ENCODE measurements at regions of chr2 and their contacts with region 1.

Region 1: DNA sequence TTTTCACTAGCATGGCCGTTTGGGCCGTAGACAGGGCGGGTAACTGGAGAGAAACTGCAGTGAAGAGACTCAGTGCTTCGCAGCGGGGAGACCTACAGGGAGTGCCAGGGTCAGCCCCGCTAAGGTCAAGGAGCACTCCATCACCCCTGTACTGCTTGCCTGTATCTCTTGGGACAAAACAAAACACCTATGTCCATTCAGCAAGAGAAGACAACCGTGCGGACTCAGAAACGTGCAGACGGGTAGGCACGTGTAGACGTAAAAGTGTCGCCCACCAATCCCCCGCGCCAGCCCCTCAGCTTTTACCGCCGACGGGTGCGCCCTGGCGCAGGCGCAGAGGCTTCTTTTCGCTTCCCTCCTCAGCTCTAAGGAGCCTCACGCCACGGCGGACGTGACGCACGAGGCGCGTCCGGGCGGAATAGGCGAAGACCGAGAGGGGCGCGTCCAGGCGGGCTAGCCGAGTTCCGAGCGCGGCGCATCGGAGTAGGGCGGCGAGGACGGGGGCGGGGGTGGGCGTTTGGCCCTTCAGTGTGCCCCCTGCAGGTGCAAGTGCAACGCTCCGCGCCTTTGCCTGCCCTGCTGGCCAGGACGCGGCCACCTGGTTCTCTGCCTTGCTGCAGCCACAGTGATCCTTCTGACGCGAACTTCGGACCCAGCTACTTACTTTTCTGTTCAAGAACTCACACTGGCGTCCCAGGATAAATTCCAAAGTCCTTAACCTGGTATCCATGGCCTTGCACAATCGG is 3.3 kb upstream of the SOS1 start:
- DNase-seq: peak; percentile 99
- H3K4me3 Mint-ChIP-seq: peak overlapping the region; percentile 87
- H3K27ac Mint-ChIP-seq: peak overlapping the region; percentile 92
- H3K4me1 Mint-ChIP-seq: peaks cover 44% of the 10 kb centered on the region
- H3K27me3 Mint-ChIP-seq: no peaks in the 10 kb centered on the region

Region 2: DNA sequence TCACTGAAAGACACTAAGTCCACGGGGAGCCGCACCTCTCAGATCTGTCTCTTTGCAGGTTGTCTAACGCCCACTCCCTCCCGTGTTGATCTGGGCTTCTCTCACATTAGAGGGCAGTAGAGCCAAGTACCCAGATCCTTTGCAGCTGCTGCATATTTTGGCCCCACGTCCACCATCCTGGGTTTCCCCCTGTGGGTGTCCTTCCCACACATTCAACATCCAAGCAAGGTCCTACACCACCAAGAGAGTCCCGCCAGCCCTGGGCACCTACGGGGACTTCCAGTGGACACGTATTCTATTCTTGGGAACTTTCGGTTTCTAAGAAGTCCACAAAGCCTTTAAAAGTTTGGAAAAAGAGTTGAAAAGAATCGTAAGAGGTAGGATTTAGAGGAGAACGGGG is 863.7 kb before region 1 on chr2:
- intact Hi-C with region 1: no loop called
- DNase-seq: no peak
- H3K4me3 Mint-ChIP-seq: no peak overlapping the region
- H3K27ac Mint-ChIP-seq: peak overlapping the region; percentile 51
- H3K4me1 Mint-ChIP-seq: peaks cover 30% of the 10 kb centered on the region
- H3K27me3 Mint-ChIP-seq: peaks cover 24% of the 10 kb centered on the region

Region 3: DNA sequence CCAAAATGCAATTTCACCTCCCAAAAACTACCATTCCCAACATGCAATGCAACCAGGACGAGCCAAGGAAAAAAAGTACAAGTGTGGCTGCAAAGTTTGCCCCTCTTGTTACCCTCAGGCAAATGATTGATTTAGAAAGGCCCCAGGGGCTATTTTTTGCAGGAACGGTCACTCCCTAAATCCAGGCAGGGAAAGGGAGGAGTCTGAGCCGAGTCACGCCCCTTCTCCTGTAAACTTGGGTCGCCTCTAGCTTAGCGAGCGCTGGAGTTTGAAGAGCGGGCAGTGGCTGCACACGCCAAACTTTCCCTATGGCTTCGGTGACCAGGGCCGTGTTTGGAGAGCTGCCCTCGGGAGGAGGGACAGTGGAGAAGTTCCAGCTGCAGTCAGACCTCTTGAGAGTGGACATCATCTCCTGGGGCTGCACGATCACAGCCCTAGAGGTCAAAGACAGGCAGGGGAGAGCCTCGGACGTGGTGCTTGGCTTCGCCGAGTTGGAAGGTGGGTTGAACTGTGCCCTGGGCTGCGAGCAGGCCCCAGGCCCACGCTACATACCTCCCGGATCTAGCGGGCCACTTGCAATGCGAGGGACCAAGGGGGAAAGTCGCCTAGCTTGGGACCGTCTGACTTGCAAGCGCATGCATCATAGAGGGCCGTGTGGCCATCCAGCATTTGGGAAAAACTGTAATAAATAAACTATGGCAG is 458.2 kb before region 1 on chr2 and contains the start of gene GALM:
- intact Hi-C with region 1: loop called (anchors 5 kb)
- DNase-seq: peak; percentile 88
- H3K4me3 Mint-ChIP-seq: peak within 1 kb of the TSS; percentile 97
- H3K27ac Mint-ChIP-seq: peak within 1 kb of the TSS; percentile 99
- H3K4me1 Mint-ChIP-seq: peaks cover 57% of the 10 kb centered on the region
- H3K27me3 Mint-ChIP-seq: no peaks in the 10 kb centered on the region
- total RNA-seq, gene GALM: 56.0 and 57.4 TPM in 2 replicates

Region 4: GRCh38 chr2:38947240-38948239 is 176.6 kb before region 1 on chr2:
- intact Hi-C with region 1: loop called (anchors 5 kb)
- DNase-seq: peak; percentile 91
- H3K4me3 Mint-ChIP-seq: no peak overlapping the region
- H3K27ac Mint-ChIP-seq: no peak overlapping the region
- H3K4me1 Mint-ChIP-seq: peaks cover 6% of the 10 kb centered on the region
- H3K27me3 Mint-ChIP-seq: peaks cover 13% of the 10 kb centered on the region

Region 5: DNA sequence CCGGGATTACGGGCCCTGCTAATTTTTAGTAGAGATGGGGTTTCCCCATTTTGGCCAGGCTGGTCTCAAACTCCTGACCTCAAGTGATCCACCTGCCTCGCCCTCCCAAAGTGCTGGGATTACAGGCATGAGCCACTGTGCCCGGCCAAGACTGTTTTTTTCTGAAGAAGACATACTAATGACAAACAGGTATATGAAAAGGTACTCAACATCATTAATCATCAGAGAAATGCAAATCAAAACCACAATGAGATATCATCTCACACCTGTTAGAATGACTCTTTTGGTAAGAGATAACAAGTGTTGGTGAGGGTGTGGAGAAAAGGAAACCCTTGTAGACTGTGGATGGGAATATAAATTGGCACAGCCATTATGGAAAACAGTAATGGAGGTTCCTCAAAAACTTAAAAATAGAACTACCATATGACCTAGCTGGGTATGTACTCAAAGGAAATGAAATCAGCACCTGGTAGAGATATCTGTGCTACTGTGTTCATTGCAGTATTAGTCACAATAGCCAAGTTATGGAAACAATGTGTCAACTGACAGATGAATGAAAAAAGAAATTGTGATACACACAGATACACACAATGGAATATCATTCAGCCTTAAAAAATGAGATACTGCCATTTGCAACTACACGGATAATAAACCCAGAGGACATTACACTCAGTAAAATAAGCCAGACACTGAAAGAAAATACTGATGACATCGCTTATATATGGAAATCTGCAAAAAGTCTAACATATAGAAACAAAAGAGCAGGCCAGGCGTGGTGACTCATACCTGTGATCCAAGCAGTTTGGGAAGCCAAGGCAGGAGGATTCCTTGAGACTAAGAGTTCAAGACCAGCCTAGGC is 24.1 kb before region 1 on chr2:
- intact Hi-C with region 1: loop called (anchors 1 kb)
- DNase-seq: no peak
- H3K4me3 Mint-ChIP-seq: peak overlapping the region; percentile 3
- H3K27ac Mint-ChIP-seq: peak overlapping the region; percentile 79
- H3K4me1 Mint-ChIP-seq: peaks cover 51% of the 10 kb centered on the region
- H3K27me3 Mint-ChIP-seq: no peaks in the 10 kb centered on the region

Region 6: GRCh38 chr2:39216346-39217191 is 92.4 kb after region 1 on chr2:
- intact Hi-C with region 1: loop called (anchors 1 kb)
- DNase-seq: peak; percentile 96
- H3K4me3 Mint-ChIP-seq: peak overlapping the region; percentile 62
- H3K27ac Mint-ChIP-seq: peak overlapping the region; percentile 86
- H3K4me1 Mint-ChIP-seq: peaks cover 61% of the 10 kb centered on the region
- H3K27me3 Mint-ChIP-seq: no peaks in the 10 kb centered on the region

Region 7: GRCh38 chr2:39436592-39437510 is 312.7 kb after region 1 on chr2 and contains the start of gene MAP4K3:
- intact Hi-C with region 1: loop called (anchors 5 kb)
- DNase-seq: peak; percentile 93
- H3K4me3 Mint-ChIP-seq: peak within 1 kb of the TSS; percentile 91
- H3K27ac Mint-ChIP-seq: peak within 1 kb of the TSS; percentile 90
- H3K4me1 Mint-ChIP-seq: peaks cover 44% of the 10 kb centered on the region
- H3K27me3 Mint-ChIP-seq: no peaks in the 10 kb centered on the region
- total RNA-seq, gene MAP4K3: 12.9 and 16.6 TPM in 2 replicates

Region 8: DNA sequence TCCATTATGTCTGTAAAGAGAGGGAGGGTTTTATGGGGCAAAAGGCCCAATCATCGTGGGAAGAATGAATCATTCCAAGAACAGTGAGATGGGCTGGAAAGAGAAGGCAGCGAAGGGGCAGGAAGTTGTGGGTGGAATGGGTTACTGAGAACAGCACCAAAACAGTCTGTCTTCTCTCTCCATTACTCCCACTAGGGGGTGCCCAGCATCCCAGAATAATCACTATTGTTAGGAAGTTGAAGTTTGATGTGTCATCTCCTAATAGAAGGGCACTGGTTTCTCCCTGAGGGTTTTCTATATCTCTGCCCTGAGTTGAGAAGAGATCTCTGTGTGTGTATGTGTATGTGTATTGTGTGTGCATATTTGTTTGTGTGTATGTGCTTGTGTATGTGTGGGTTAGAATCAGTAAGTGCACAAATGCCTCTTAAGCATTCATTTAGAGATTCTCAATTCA is 389.5 kb after region 1 on chr2:
- intact Hi-C with region 1: loop called (anchors 2 kb)
- DNase-seq: peak; percentile 77
- H3K4me3 Mint-ChIP-seq: peak overlapping the region; percentile 15
- H3K27ac Mint-ChIP-seq: peak overlapping the region; percentile 59
- H3K4me1 Mint-ChIP-seq: peaks cover 40% of the 10 kb centered on the region
- H3K27me3 Mint-ChIP-seq: peaks cover 4% of the 10 kb centered on the region

Measured in activated CD4-positive, alpha-beta T cell treated with anti-CD3 and anti-CD28 coated beads, Interleukin-2, amount 10 ng/mL, durations not matched to agents 24 days and 14 days (primary cell).